Calu3 (cell line): ENCODE measurements at regions of chr16 and their contacts with region 1.

Region 1: DNA sequence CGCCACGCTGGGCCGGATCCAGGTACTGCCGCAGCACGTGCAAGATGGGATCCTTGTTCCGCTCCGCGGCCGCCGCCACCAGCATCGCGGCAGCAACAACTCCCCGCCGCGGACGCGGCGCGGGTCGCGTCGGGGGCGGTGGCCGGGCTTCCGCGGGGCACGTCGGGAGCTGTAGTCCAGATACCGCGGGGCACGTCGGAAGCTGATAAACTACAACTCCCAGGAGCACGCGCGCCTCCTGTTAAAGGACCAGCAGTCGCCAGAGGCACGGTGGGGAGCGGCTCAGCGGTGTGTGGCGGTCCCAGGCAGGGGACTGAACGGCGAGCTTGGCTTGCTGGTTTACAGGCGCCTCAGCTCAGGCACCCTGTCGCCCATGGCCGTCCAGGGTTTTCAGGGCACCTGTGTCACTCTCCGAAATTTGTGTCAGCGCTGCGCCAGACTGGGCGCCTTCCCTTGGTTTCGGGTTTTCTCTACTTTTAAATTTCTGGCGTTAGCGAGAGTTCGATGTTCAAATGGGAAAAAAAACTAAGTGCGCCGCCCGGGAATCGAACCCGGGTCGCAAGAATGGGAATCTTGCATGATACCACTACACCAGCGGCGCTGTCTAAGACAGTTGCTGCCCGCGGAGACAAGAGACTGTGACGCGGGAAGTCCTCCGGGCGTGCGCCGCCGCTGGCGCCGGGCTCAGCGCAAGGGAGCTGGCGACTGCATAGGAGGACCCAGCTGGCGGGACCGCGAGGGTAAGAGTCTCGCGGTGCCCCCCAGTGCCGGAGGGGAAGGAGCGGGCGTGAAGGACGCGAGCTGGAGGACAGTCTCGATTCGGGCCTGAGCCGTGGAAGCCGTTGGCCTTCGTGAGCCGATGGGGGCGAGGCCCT is at the start of gene METTL26:
- DNase-seq: peak; percentile 96
- H3K4me3 Mint-ChIP-seq: peak within 1 kb of the TSS; percentile 87
- H3K27ac Mint-ChIP-seq: peak within 1 kb of the TSS; percentile 91
- H3K4me1 Mint-ChIP-seq: peaks cover 8% of the 10 kb centered on the region
- H3K27me3 Mint-ChIP-seq: no peaks in the 10 kb centered on the region
- CTCF ChIP-seq: no peak
- total RNA-seq, gene METTL26: 117 and 121 TPM in 2 replicates

Region 2: GRCh38 chr16:527006-527753 is 109.3 kb before region 1 on chr16 and contains the start of gene CAPN15:
- CTCF ChIA-PET with region 1: no interaction called
- intact Hi-C with region 1: loop called (anchors 10 kb)
- DNase-seq: peak; percentile 93
- H3K4me3 Mint-ChIP-seq: peak within 1 kb of the TSS; percentile 92
- H3K27ac Mint-ChIP-seq: peak within 1 kb of the TSS; percentile 85
- H3K4me1 Mint-ChIP-seq: peaks cover 38% of the 10 kb centered on the region
- H3K27me3 Mint-ChIP-seq: no peaks in the 10 kb centered on the region
- CTCF ChIP-seq: peak; percentile 45
- total RNA-seq, gene CAPN15: 108 and 120 TPM in 2 replicates

Region 3: DNA sequence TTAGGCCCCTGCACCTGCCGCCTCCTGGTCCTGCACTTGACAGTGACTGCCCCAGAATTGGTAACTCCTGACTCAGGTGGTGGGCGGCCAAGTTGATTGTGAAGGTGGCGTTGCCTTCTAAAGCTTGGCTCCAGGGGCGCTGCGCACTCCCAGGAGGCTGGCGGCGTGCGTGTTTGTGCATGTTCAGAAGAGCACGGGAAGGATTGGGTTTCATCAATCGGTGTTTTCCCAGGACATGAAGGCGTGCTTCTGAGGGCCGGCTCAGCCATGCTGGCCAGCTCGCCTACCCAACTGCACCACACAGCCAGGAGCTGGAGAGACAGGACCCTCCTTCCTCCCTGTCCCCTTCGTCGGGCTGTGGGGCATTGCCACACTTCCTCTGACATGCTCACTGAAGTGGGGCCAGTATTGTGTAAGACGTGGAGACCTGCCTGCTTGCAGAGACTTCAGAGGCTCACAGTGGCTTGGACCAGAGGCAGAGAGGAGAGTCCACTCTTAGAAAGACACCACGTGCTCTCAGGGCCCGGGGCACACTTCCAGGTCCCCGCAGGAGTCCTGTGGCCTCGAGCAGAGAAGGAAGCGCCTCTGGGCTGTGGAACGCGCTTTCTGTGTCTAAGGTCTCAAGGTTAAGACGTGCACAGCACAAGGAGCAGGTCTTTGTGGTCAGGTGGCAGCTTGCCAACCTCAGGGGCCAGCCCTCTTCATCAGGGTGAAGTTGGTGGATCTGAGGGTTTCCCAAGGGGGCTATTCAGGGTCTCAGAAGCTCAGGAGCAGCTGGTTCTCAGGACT is 43.7 kb before region 1 on chr16:
- CTCF ChIA-PET with region 1: interaction called, 8 read pairs
- intact Hi-C with region 1: loop called (anchors 2 kb)
- DNase-seq: peak; percentile 51
- H3K4me3 Mint-ChIP-seq: peak overlapping the region; percentile 92
- H3K27ac Mint-ChIP-seq: peak overlapping the region; percentile 83
- H3K4me1 Mint-ChIP-seq: peaks cover 59% of the 10 kb centered on the region
- H3K27me3 Mint-ChIP-seq: no peaks in the 10 kb centered on the region
- CTCF ChIP-seq: no peak